Activated CD4-positive, alpha-beta T cell treated with anti-CD3 and anti-CD28 coated beads for 36 hours (primary cell): ENCODE measurements at regions of chr3 and their contacts with region 1.

Region 1: DNA sequence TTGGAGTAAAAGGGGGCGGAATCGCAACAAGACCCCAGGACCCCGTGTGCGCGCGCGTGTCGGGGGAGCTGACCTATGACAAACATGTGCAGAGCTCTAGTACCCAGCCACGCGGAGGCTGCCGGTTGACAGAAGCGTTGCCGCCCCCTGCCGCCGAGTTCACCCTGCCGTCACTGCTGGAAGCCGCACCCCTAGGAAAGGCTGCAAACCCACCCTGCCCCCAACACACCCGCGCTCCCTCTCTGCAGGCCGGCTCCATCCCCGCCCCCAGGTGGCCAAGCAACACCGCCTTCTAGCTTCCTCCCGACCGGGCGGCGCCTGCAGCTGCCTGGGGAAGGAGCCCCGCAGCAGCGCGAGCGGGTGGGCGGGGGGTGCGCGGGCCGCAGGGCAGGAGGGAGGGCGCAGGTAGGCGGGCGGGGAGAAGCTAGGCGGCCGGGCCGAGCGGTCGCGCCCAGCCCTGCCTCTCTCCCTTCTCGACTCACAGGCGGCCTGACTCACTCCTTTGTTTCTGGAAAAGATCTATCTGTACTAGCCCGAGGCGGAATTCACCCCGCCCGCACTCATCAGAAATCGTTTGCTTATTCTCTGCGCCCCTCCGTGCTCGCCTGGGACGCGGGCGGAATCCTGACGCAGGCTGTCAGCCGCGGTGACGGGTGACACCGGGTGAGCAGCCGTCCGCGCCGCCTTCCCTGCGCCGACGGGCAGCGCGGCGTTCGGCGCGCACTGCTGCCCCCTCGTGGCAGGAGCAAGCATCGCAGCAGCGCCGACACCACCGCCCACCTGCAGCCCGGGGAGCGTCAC is 160.8 kb downstream of the GAP43 start:
- DNase-seq: peak; percentile 94
- ATAC-seq: peak; percentile 91
- H3K4me3 Mint-ChIP-seq: peak overlapping the region; percentile 81
- H3K27ac Mint-ChIP-seq: peak overlapping the region; percentile 97
- H3K4me1 Mint-ChIP-seq: peaks cover 18% of the 10 kb centered on the region
- H3K27me3 Mint-ChIP-seq: no peaks in the 10 kb centered on the region

Region 2: DNA sequence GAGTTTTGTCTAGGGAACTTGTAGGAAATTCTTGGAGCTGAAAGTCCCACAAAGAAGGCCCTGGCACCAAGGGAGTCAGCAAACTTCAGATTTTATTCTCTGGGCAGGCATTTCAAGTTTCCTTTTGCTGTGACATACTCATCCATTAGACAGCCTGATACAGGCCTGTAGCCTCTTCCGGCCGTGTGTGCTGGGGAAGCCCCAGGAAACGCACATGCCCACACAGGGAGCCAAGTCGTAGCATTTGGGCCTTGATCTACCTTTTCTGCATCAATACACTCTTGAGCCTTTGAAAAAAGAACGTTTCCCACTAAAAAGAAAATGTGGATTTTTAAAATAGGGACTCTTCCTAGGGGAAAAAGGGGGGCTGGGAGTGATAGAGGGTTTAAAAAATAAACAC is 1475.3 kb before region 1 on chr3:
- CTCF ChIA-PET with region 1: no interaction called
- POLR2A ChIA-PET with region 1: no interaction called
- intact Hi-C with region 1: loop called in 1 of 2 experiments (anchors 10 kb)
- DNase-seq: peak; percentile 69
- ATAC-seq: peak; percentile 75
- H3K4me3 Mint-ChIP-seq: peak overlapping the region; percentile 40
- H3K27ac Mint-ChIP-seq: peak overlapping the region; percentile 95
- H3K4me1 Mint-ChIP-seq: peaks cover 56% of the 10 kb centered on the region
- H3K27me3 Mint-ChIP-seq: no peaks in the 10 kb centered on the region

Region 3: GRCh38 chr3:115147329-115148141 is 636.6 kb before region 1 on chr3:
- CTCF ChIA-PET with region 1: interaction called, 3 read pairs
- POLR2A ChIA-PET with region 1: no interaction called
- intact Hi-C with region 1: loop called (anchors 1 to 2 kb)
- DNase-seq: peak; percentile 97
- ATAC-seq: peak; percentile 85
- H3K4me3 Mint-ChIP-seq: peak overlapping the region; percentile 97
- H3K27ac Mint-ChIP-seq: peak overlapping the region; percentile 98
- H3K4me1 Mint-ChIP-seq: peaks cover 21% of the 10 kb centered on the region
- H3K27me3 Mint-ChIP-seq: no peaks in the 10 kb centered on the region

Region 4: GRCh38 chr3:115503394-115503793 is 280.7 kb before region 1 on chr3:
- CTCF ChIA-PET with region 1: no interaction called
- POLR2A ChIA-PET with region 1: no interaction called
- intact Hi-C with region 1: no loop called
- DNase-seq: no peak
- ATAC-seq: no peak
- H3K4me3 Mint-ChIP-seq: no peak overlapping the region
- H3K27ac Mint-ChIP-seq: no peak overlapping the region
- H3K4me1 Mint-ChIP-seq: no peaks in the 10 kb centered on the region
- H3K27me3 Mint-ChIP-seq: peaks cover 12% of the 10 kb centered on the region

Region 5: GRCh38 chr3:115615001-115615814 is 168.9 kb before region 1 on chr3:
- CTCF ChIA-PET with region 1: interaction called, 3 read pairs
- POLR2A ChIA-PET with region 1: no interaction called
- intact Hi-C with region 1: loop called in 1 of 2 experiments (anchors 2 kb)
- DNase-seq: no peak
- ATAC-seq: no peak
- H3K4me3 Mint-ChIP-seq: no peak overlapping the region
- H3K27ac Mint-ChIP-seq: no peak overlapping the region
- H3K4me1 Mint-ChIP-seq: peaks cover 20% of the 10 kb centered on the region
- H3K27me3 Mint-ChIP-seq: peaks cover 21% of the 10 kb centered on the region

Region 6: DNA sequence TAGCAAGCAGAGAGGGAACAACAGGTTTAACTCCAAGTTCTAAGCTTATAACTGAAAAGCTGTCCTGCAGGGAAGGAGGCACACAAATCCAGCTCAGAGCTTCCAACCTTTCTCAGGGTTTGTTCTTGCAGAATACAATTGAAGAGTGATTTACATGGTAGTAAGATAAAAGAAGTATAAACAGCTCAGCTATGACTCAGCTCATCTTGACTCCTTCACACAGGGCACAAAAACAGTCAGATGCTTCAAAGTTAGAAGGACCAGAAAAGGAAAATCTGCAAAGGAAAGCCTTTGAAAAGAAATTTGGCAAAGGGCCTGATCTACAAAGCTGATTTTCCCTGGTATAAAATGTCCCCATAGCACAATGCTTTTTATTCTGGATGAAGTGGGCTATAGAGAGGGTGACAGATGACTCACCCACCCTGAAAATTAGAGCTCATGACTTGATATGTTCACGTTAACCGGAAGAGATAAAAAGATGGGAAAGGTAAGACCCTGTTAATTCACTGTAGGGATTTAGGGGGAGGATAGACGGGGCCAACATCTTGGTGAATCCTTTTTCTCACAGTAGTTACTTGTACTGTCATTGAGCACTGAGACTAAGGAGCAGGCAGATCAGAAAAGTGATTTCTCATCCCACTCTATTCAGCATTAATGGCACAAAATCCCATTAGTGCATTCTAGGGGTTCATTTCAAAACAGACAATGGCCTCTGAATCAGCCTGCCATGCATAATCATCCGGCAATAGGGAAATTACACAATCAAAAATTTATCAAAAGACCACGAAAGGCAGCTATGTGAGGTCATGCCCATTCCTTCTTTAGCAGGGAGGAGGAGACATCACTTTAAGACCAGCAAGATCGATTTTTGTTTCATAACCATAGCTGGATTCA is 17.3 kb before region 1 on chr3:
- CTCF ChIA-PET with region 1: interaction called, 11 read pairs
- POLR2A ChIA-PET with region 1: no interaction called
- intact Hi-C with region 1: no loop called
- DNase-seq: no peak
- ATAC-seq: no peak
- H3K4me3 Mint-ChIP-seq: no peak overlapping the region
- H3K27ac Mint-ChIP-seq: no peak overlapping the region
- H3K4me1 Mint-ChIP-seq: no peaks in the 10 kb centered on the region
- H3K27me3 Mint-ChIP-seq: peaks cover 6% of the 10 kb centered on the region

Region 7: DNA sequence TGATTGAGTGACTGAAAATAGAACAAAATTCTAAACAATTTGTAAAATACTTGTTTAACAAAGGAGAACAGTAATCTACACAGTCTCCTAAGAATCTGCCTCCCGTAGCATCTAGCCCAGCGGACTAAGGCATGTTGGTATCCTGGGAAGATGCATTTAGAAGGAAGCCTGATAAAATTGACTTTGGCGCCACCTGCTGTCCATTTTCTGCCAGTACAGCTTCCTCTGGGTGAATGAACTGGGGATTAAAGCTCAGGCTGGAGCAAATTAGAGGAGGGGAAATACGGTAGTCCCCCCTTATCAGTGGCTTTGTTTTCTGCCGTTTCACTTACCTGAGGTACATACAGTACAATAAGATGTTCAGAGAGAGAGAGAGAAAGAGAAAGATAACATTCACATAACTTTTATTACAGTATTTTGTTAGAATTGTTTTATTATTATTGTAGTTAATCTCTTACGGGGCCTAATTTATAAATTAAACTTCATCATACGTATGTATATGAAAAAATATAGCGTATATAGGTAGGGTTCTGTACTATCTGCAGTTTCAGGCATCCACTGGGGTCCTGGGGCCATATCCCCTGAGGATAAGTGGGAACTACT is 30.7 kb after region 1 on chr3:
- CTCF ChIA-PET with region 1: interaction called, 14 read pairs
- POLR2A ChIA-PET with region 1: interaction called, 4 read pairs
- intact Hi-C with region 1: loop called (anchors 1 to 2 kb)
- DNase-seq: peak; percentile 79
- ATAC-seq: peak; percentile 57
- H3K4me3 Mint-ChIP-seq: no peak overlapping the region
- H3K27ac Mint-ChIP-seq: no peak overlapping the region
- H3K4me1 Mint-ChIP-seq: no peaks in the 10 kb centered on the region
- H3K27me3 Mint-ChIP-seq: peaks cover 7% of the 10 kb centered on the region